ENCODE measurements at regions of chr13 and their contacts with region 1.

Region 1: DNA sequence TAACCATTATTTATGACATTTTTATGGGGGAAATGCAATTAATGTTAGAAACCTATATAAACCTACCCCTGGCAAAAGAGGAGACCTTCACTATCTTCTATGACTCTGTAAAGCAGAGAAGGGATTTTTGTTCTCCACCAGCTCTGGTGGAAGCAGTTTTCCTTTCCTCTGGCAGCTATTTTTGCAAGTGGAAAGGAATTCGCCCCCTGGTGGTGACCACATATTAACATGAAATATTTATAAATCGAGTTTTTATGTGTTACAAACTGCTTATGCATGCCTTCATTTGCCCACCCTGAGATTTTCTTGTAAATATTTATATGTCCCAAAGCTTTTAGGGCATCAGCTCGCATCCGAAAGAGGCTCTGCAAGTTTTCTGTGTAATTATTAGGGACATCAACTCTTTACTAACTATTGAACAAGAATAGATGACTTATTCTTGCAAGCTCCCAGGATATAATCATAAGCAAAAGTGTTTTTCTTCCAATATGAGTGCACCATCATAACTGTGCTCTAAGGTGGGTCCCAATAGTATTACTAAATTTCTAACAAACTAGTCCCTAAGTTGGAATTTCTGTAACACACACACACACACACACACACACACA is 62.4 kb downstream of the SERTM1 start:
- DNase-seq: no peak
- H3K4me3 ChIP-seq: no peak overlapping the region
- H3K27ac ChIP-seq: no peak overlapping the region
- H3K4me1 ChIP-seq: no peaks in the 10 kb centered on the region
- H3K27me3 ChIP-seq: no peaks in the 10 kb centered on the region
- CTCF ChIP-seq: peak; percentile 76

Region 2: DNA sequence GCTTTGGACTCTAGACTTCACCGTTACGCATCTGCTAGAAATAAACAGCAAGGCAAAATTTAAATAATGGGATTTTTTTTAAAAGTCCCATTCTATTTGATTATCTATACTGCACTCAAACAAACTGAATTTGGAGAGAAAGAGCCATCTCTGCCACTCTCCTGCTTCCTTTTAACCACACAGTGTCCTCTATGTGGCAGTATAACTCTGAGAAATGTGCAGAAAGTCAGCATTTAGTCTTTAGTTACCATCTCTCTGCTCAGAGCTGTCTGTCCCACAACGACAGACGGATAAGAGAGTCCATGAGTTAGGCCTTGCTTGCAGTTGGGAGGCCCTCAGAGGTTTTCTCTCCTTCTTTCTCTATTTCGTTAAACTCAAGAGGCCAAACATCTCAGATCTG is 282.7 kb before region 1 on chr13:
- intact Hi-C with region 1: loop called (anchors 5 kb)
- DNase-seq: no peak
- H3K4me3 ChIP-seq: no peak overlapping the region
- H3K27ac ChIP-seq: no peak overlapping the region
- H3K4me1 ChIP-seq: no peaks in the 10 kb centered on the region
- H3K27me3 ChIP-seq: peaks cover 29% of the 10 kb centered on the region
- CTCF ChIP-seq: peak; percentile 62

Region 3: GRCh38 chr13:36549755-36550154 is 186.5 kb before region 1 on chr13:
- intact Hi-C with region 1: no loop called
- DNase-seq: no peak
- H3K4me3 ChIP-seq: no peak overlapping the region
- H3K27ac ChIP-seq: no peak overlapping the region
- H3K4me1 ChIP-seq: peaks cover 32% of the 10 kb centered on the region
- H3K27me3 ChIP-seq: no peaks in the 10 kb centered on the region
- CTCF ChIP-seq: no peak

Measured in left ventricle myocardium inferior (tissue), 1 donor.